ENCODE measurements at regions of chr1 and their contacts with region 1.

Region 1: GRCh38 chr1:78617615-78618026 is 2.6 kb upstream of the IFI44L start:
- DNase-seq: peak; percentile 71
- H3K4me3 ChIP-seq: no peak overlapping the region
- H3K27ac ChIP-seq: no peak overlapping the region
- H3K4me1 ChIP-seq: no peaks in the 10 kb centered on the region
- H3K27me3 ChIP-seq: no peaks in the 10 kb centered on the region
- CTCF ChIP-seq: peak; percentile 67 to 92 (median 86)
- POLR2A ChIP-seq: no peak

Region 2: DNA sequence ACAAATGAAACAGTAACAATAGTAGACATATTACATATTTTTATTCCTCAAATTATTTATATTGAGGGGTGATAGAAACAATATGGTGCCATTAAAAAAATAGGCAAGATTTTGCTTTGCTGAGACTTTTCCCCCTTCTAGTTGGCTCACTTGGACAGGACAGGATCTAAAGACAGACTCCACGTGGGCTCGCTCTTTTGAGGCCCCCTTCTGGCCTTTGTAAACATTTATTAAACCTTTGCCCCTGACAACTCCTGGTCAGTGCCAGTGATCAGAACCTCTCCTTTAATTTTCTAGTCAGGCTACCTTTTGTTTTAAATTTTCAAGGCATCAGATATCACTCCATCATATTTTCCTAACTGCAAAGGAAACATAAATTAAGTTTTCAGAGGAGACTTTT is 47.1 kb before region 1 on chr1:
- intact Hi-C with region 1: no loop called
- DNase-seq: no peak
- H3K4me3 ChIP-seq: no peak overlapping the region
- H3K27ac ChIP-seq: no peak overlapping the region
- H3K4me1 ChIP-seq: no peaks in the 10 kb centered on the region
- H3K27me3 ChIP-seq: no peaks in the 10 kb centered on the region
- CTCF ChIP-seq: no peak
- POLR2A ChIP-seq: no peak

Region 3: DNA sequence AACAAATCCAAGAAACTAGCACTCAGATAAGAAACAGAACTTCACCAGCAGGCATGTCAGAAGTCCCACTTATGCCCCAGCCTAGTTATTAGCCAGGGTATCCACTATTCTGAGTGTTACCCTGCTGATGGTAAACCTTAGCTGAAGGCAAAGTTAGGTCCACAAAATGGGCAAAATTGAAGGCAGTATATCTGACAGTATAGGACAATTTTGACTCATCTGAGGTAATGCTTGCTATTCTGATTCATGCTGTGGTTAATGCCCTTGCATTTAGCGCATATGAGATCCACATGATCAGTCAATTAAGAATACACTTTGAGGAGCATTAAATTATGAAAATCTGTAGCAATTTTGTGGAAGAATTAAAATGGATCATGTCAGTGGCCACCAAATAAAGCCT is 47.1 kb after region 1 on chr1:
- intact Hi-C with region 1: no loop called
- DNase-seq: no peak
- H3K4me3 ChIP-seq: no peak overlapping the region
- H3K27ac ChIP-seq: no peak overlapping the region
- H3K4me1 ChIP-seq: no peaks in the 10 kb centered on the region
- H3K27me3 ChIP-seq: no peaks in the 10 kb centered on the region
- CTCF ChIP-seq: no peak
- POLR2A ChIP-seq: no peak

Region 4: GRCh38 chr1:78676347-78676982 is 58.8 kb after region 1 on chr1:
- intact Hi-C with region 1: loop called (anchors 2 kb)
- DNase-seq: peak; percentile 66
- H3K4me3 ChIP-seq: no peak overlapping the region
- H3K27ac ChIP-seq: no peak overlapping the region
- H3K4me1 ChIP-seq: no peaks in the 10 kb centered on the region
- H3K27me3 ChIP-seq: no peaks in the 10 kb centered on the region
- CTCF ChIP-seq: peak; percentile 68 to 89 (median 83)
- POLR2A ChIP-seq: no peak

Region 5: DNA sequence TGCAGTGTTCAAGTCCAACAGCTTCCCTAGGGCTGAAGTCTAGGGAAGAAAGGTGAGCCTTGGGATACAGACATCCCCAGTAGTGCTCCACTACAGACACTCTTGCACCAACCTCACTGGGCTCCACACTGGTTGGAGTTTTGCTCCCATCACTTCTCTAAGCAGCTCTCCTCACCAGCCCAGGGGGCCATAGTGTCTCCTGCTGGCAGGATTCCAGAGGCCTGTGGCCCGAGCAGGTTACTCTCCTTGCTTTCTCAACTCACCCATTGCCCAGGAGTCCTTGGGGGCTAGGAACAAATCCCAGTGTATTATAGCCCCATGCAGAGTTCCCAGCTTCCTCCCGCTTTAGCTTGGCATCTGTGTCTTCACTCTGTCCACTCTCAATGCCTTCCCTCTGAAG is 84.8 kb after region 1 on chr1:
- intact Hi-C with region 1: no loop called
- DNase-seq: no peak
- H3K4me3 ChIP-seq: no peak overlapping the region
- H3K27ac ChIP-seq: no peak overlapping the region
- H3K4me1 ChIP-seq: no peaks in the 10 kb centered on the region
- H3K27me3 ChIP-seq: no peaks in the 10 kb centered on the region
- CTCF ChIP-seq: no peak
- POLR2A ChIP-seq: no peak

Region 6: DNA sequence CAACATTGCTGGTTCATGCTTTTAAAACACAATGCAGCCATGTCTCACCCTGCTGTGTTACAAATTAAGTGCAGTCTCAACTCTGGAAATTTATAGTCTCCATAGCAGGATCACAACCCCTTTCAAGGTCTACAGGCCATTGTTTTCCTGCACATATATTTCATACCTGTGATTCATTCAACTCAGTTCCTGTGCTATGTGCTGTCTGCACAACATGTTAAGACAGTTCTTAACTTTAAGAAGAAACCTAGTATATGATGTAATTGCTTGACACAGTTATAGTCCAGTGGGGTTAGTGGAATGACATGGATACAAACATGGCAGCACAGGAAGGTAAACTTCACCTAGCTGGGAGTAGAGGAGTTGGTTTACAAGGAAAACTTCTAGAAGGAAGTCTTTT is 138.4 kb after region 1 on chr1:
- intact Hi-C with region 1: no loop called
- DNase-seq: no peak
- H3K4me3 ChIP-seq: no peak overlapping the region
- H3K27ac ChIP-seq: no peak overlapping the region
- H3K4me1 ChIP-seq: no peaks in the 10 kb centered on the region
- H3K27me3 ChIP-seq: no peaks in the 10 kb centered on the region
- CTCF ChIP-seq: no peak
- POLR2A ChIP-seq: no peak